Cardiac septum (tissue), 1 donor: ENCODE measurements at regions of chr4 and their contacts with region 1.

Region 1: DNA sequence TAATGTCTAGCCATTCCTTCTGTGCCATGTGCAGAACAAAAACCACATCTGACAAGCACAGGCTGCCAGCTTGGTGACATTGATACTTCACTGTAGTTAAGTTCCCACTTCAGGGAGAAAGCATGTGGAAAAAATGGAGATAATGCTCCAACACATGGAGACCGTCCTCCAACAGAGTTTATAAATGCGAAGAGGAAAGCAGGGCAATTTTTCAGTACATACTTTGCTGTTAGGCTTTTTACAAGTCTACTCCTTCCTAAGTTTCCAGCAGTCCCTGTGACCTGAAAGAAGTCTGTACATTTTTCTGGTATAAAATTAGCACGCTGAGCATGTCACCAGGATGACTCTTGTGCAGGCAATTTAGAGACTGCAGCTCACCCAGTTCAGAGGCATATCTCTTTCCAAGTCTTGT is 766.9 kb upstream of the IGFBP7 start:
- DNase-seq: no peak

Region 2: DNA sequence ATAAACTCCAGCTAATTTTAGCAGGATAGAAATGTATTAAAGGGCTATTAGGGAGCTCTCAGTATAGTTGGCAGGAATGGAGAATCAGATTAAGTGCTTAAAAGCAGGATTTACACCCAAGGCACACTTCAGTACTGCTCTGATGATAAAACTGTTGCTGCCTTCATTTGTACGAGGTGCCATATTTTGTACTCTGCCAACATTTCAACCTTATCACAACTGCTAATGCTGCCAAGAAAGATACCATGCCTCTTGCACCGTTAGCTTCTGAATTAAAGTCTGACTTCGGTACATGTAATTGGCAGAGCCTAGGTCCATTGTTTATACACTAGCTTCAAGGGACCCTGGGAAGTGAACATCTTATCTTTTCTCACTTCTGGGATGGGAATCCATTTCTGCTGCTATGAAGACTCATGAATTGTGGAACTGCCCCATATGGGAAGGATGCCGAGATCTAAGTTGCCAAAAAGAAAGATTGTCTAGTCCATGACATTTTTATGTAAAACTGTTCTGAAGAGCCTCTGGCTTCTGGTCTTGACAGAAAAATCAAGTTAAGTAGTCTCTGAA is 142.9 kb before region 1 on chr4:
- intact Hi-C with region 1: loop called (anchors 10 kb)
- DNase-seq: no peak

Region 3: DNA sequence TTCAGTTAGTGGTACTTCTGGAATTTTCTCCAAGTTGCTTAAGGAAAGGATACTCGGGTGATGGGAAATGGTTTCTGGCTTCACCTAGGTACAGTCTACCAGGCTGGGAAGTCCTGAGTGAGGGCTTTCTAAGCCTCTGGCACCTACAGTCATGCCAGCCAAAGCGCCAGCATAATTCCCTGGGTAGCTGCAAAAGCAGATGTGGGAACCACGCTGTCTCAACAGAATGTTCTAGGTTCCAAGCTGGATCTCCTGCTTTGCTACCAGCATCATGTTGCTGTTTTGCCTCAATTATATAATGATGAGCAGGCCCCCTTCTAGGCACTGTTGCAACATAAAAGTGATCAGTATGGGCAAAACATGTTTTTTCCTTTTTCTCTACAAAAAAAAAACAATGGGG is 40.6 kb after region 1 on chr4:
- intact Hi-C with region 1: no loop called
- DNase-seq: no peak